Mammary epithelial cell (primary cell): ENCODE measurements at regions of chr15 and their contacts with region 1.

Region 1: DNA sequence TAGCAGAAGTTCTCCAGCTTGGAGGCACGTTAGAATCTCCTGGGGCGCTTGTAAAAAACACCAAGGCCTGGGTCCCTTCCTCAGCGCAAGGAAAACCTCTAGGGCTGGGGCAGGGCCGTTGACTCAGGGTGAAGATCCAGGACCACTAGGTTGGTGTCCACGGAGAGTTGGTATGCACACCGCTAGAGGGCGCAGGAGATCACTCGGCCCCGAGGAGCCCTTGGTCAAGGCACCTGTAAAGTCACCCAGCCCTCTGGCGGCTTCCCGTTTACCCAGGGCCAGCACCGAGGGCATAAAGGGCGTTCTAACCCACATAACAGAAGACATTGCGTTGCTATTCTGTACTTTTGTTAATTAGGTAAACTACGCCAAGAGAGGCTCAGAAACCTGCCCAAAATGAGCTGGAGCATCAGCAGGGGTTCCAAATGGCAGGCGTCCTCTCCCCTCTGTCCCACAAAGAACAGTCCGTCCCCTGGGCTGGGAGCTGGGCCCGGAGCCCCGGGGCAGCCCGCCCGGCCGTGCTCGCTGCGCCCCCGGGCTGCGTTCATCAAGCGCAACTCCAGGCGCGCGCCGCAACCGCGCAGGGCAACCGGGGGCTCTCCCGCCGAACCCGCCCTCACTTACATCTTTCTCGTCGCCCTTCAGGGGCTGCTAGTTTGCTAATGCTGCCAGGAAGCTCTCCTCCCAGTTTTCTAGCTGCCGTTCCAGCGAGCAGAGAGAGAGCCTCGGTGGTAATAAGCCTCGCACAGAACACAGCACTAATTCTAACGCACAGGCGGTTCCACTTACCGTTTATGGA is 332.1 kb downstream of the ARRDC4 start:
- DNase-seq: peak; percentile 20
- H3K4me3 ChIP-seq: peak overlapping the region in 1 of 3 experiments; percentile 13
- H3K27ac ChIP-seq: no peak overlapping the region
- H3K4me1 ChIP-seq: peaks cover 5% of the 10 kb centered on the region
- H3K27me3 ChIP-seq: peaks cover 4% of the 10 kb centered on the region
- CTCF ChIP-seq: peak; percentile 72 to 90

Region 2: GRCh38 chr15:96860742-96861141 is 1431.9 kb before region 1 on chr15:
- CTCF ChIA-PET with region 1: interaction called, 14 read pairs
- dilution Hi-C with region 1: no loop called
- in situ Hi-C with region 1: no loop called
- intact Hi-C with region 1: no loop called
- DNase-seq: no peak
- H3K4me3 ChIP-seq: no peak overlapping the region
- H3K27ac ChIP-seq: no peak overlapping the region
- H3K4me1 ChIP-seq: no peaks in the 10 kb centered on the region
- H3K27me3 ChIP-seq: no peaks in the 10 kb centered on the region
- CTCF ChIP-seq: no peak

Region 3: GRCh38 chr15:97903971-97904572 is 388.6 kb before region 1 on chr15:
- CTCF ChIA-PET with region 1: no interaction called
- dilution Hi-C with region 1: no loop called
- in situ Hi-C with region 1: loop called in 1 of 2 experiments (anchors 10 kb)
- intact Hi-C with region 1: loop called (anchors 1 kb)
- DNase-seq: peak; percentile 67
- H3K4me3 ChIP-seq: no peak overlapping the region
- H3K27ac ChIP-seq: no peak overlapping the region
- H3K4me1 ChIP-seq: peaks cover 20% of the 10 kb centered on the region
- H3K27me3 ChIP-seq: no peaks in the 10 kb centered on the region
- CTCF ChIP-seq: peak; percentile 85 to 93

Region 4: GRCh38 chr15:98085003-98085639 is 207.5 kb before region 1 on chr15:
- CTCF ChIA-PET with region 1: no interaction called
- dilution Hi-C with region 1: no loop called
- in situ Hi-C with region 1: no loop called
- intact Hi-C with region 1: loop called (anchors 2 kb)
- DNase-seq: peak; percentile 51
- H3K4me3 ChIP-seq: no peak overlapping the region
- H3K27ac ChIP-seq: no peak overlapping the region
- H3K4me1 ChIP-seq: no peaks in the 10 kb centered on the region
- H3K27me3 ChIP-seq: no peaks in the 10 kb centered on the region
- CTCF ChIP-seq: peak; percentile 67 to 71